ENCODE measurements at regions of chr12 and their contacts with region 1.

Region 1: GRCh38 chr12:54294152-54294952 is 6.5 kb downstream of the NFE2 start:
- DNase-seq: peak; percentile 79
- H3K4me3 Mint-ChIP-seq: no peak overlapping the region
- H3K27ac Mint-ChIP-seq: no peak overlapping the region
- H3K4me1 Mint-ChIP-seq: peaks cover 3% of the 10 kb centered on the region
- H3K27me3 Mint-ChIP-seq: peaks cover 2% of the 10 kb centered on the region

Region 2: GRCh38 chr12:53844989-53845844 is 449.1 kb before region 1 on chr12:
- CTCF ChIA-PET with region 1: no interaction called
- POLR2A ChIA-PET with region 1: no interaction called
- intact Hi-C with region 1: no loop called
- DNase-seq: no peak
- H3K4me3 Mint-ChIP-seq: no peak overlapping the region
- H3K27ac Mint-ChIP-seq: no peak overlapping the region
- H3K4me1 Mint-ChIP-seq: no peaks in the 10 kb centered on the region
- H3K27me3 Mint-ChIP-seq: peaks cover 50% of the 10 kb centered on the region

Region 3: DNA sequence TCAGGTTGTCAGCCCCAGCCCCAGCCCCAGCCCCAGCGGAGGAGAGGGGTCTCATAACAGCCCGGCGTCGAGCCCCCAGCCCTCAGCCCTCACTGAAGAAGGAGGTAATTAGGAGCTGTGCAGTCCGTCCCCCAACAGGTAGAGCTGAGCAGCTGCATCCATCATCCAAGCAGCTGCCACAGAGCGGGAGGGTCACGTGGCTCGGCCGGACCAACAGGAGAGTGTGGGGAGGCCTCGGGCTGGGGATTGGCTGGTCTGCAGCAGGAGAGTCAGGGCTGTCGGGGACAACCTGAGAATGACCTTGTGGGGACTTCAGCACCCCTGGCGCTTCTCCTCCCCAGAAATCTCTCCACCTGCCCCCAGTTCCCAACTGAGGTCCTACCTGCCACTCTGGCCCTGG is 135.2 kb before region 1 on chr12:
- CTCF ChIA-PET with region 1: no interaction called
- POLR2A ChIA-PET with region 1: no interaction called
- intact Hi-C with region 1: no loop called
- DNase-seq: peak; percentile 49
- H3K4me3 Mint-ChIP-seq: no peak overlapping the region
- H3K27ac Mint-ChIP-seq: no peak overlapping the region
- H3K4me1 Mint-ChIP-seq: no peaks in the 10 kb centered on the region
- H3K27me3 Mint-ChIP-seq: peaks cover 16% of the 10 kb centered on the region

Region 4: DNA sequence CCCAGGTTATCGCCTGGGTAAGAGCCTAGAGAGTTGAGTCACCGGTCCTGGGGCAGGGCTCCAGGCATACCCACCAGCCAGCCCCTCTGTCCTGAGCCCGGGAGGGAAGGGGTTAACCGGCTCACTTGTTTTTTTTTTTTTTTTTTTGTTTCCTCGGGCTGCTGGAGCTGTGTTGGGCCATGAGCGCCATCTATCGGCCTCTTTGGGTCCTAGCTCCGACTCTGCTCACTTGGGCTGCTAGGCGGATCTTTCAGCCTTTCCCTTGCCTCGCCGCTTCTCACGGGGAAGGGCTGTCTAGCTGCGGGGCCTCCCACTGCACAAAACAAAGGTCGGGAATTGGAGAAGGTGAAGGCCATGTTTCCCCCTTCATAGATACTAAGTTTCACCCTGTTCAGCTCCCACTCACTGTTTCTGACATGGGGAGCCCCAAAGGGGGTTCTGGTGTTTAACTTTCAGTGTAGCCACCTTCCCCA is 102.8 kb before region 1 on chr12:
- CTCF ChIA-PET with region 1: no interaction called
- POLR2A ChIA-PET with region 1: no interaction called
- intact Hi-C with region 1: no loop called
- DNase-seq: peak; percentile 83
- H3K4me3 Mint-ChIP-seq: no peak overlapping the region
- H3K27ac Mint-ChIP-seq: no peak overlapping the region
- H3K4me1 Mint-ChIP-seq: peaks cover 17% of the 10 kb centered on the region
- H3K27me3 Mint-ChIP-seq: peaks cover 24% of the 10 kb centered on the region

Region 5: GRCh38 chr12:54306925-54307741 is 12.8 kb after region 1 on chr12:
- CTCF ChIA-PET with region 1: interaction called, 16 read pairs
- POLR2A ChIA-PET with region 1: no interaction called
- intact Hi-C with region 1: no loop called
- DNase-seq: peak; percentile 69
- H3K4me3 Mint-ChIP-seq: no peak overlapping the region
- H3K27ac Mint-ChIP-seq: no peak overlapping the region
- H3K4me1 Mint-ChIP-seq: peaks cover 12% of the 10 kb centered on the region
- H3K27me3 Mint-ChIP-seq: peaks cover 26% of the 10 kb centered on the region

Region 6: DNA sequence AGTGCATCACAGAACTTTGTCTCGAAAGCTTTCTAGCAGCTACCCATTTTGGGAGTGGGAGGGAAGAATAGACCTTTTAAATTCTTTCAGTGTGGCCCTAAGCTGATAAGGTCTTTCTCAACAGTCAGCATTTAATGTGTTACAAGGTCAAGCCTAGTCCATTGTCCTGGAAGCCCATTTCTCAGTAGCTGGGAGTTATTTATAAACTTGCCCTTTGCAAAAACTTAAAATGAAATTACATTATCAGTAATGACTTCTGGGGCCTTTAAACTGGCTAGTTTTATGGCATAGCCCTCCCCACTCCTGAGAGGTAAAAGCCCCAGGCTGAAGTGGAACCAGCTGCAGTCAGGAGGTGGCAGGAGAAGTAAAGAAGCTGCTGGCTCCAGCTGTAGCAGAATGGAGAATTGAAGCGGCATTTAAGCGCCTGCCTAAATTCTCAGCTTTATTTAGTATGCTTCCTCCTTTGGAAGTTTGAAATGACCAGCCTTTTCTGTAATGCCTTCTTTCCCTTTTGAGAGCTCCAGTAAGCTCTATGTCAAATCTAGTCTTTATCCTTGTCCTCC is 43.0 kb after region 1 on chr12:
- CTCF ChIA-PET with region 1: interaction called, 31 read pairs
- POLR2A ChIA-PET with region 1: no interaction called
- intact Hi-C with region 1: no loop called
- DNase-seq: no peak
- H3K4me3 Mint-ChIP-seq: no peak overlapping the region
- H3K27ac Mint-ChIP-seq: no peak overlapping the region
- H3K4me1 Mint-ChIP-seq: peaks cover 18% of the 10 kb centered on the region
- H3K27me3 Mint-ChIP-seq: no peaks in the 10 kb centered on the region

Region 7: GRCh38 chr12:54359033-54359761 is 64.8 kb after region 1 on chr12:
- CTCF ChIA-PET with region 1: interaction called, 76 read pairs
- POLR2A ChIA-PET with region 1: no interaction called
- intact Hi-C with region 1: loop called (anchors 2 kb)
- DNase-seq: peak; percentile 97
- H3K4me3 Mint-ChIP-seq: no peak overlapping the region
- H3K27ac Mint-ChIP-seq: no peak overlapping the region
- H3K4me1 Mint-ChIP-seq: peaks cover 16% of the 10 kb centered on the region
- H3K27me3 Mint-ChIP-seq: no peaks in the 10 kb centered on the region

Measured in activated CD4-positive, alpha-beta memory T cell treated with anti-CD3 and anti-CD28 coated beads for 36 hours (primary cell).